ENCODE measurements at regions of chr12 and their contacts with region 1.

Region 1: GRCh38 chr12:30847259-30847658 is 79.3 kb upstream of the TSPAN11 start:
- DNase-seq: peak in 1 of 2 donors; percentile 69
- H3K4me3 ChIP-seq: no peak overlapping the region
- H3K27ac ChIP-seq: no peak overlapping the region
- H3K4me1 ChIP-seq: peaks cover 0 to 12% (median 2%) of the 10 kb centered on the region in 4 donors
- H3K27me3 ChIP-seq: no peaks in the 10 kb centered on the region
- CTCF ChIP-seq: peak in 4 of 7 experiments; percentile 31 to 65 (median 56)
- EP300 ChIP-seq: no peak
- POLR2A ChIP-seq: no peak

Region 2: DNA sequence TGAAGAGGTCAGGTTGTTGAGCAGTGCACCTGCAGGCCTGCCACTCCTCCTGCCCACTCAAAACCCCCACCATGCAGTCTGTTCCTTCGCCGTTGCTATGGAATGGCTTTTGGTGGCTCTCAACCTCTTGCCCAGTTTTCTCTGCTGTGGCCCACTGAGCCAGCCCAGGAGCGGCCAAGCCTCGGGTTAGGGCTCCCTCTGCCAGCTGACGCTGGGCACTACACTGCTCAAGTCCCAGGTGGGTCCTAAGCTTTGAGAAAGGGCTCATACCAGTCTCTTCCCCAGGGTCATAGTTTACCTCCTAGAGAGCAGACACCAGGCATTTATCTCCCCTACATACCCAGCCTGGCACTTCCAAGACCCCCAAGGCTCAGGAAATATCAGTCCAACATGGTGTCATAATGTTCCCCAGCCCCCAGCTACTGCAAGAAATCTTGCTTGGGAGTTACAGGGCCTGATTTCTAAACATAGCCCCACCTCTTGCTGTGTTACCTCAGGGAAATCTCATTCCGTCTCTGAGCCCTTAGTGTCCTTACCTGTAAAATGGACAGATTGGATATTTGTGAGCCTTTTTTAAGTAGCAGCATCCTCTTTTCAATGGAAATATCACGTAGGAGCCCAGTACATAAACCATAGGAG is 138.7 kb after region 1 on chr12:
- intact Hi-C with region 1: loop called (anchors 10 kb)
- DNase-seq: peak; percentile 59 to 83
- H3K4me3 ChIP-seq: no peak overlapping the region
- H3K27ac ChIP-seq: no peak overlapping the region
- H3K4me1 ChIP-seq: peaks cover 0 to 18% (median 11%) of the 10 kb centered on the region in 4 donors
- H3K27me3 ChIP-seq: no peaks in the 10 kb centered on the region
- CTCF ChIP-seq: peak in 4 of 7 experiments; percentile 35 to 69 (median 56)
- EP300 ChIP-seq: no peak
- POLR2A ChIP-seq: no peak

Region 3: DNA sequence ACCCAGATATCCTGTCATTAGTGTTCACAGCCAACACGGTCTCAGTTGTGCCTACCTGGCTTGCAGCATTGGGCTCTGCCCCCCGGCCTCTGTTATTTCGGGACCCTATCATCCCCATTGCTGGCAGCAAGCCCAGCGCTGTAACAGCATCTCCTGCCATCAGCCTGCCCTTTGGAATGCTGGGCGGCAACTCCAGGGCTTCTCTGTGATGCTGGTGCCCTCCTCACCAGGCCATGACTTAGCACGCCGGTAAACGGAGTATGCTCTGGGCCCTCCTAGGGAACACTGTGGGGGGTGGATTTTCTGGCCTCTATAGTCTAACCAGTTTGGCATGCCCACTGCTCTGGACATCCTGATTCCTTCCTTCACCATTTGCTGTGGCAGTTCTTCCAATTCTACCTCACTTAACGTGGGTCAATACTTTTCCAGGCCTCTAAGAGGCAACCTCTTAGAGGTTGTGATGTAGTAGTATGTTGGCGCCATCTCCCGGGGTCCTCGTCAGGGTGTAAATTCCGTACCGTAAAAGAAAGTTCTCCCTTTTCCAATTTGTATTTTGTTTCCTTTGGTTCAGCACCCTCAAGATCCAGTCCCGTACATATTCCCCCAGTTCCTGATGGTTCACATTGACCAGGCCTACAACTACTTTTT is 398.7 kb after region 1 on chr12:
- intact Hi-C with region 1: loop called (anchors 10 kb)
- DNase-seq: peak in 1 of 2 donors; percentile 44
- H3K4me3 ChIP-seq: no peak overlapping the region
- H3K27ac ChIP-seq: no peak overlapping the region
- H3K4me1 ChIP-seq: no peaks in the 10 kb centered on the region
- H3K27me3 ChIP-seq: no peaks in the 10 kb centered on the region
- CTCF ChIP-seq: no peak
- EP300 ChIP-seq: no peak
- POLR2A ChIP-seq: no peak

Measured in stomach (tissue), 19 donors.